H1 (cell line): ENCODE measurements at regions of chr1 and their contacts with region 1.

Region 1: DNA sequence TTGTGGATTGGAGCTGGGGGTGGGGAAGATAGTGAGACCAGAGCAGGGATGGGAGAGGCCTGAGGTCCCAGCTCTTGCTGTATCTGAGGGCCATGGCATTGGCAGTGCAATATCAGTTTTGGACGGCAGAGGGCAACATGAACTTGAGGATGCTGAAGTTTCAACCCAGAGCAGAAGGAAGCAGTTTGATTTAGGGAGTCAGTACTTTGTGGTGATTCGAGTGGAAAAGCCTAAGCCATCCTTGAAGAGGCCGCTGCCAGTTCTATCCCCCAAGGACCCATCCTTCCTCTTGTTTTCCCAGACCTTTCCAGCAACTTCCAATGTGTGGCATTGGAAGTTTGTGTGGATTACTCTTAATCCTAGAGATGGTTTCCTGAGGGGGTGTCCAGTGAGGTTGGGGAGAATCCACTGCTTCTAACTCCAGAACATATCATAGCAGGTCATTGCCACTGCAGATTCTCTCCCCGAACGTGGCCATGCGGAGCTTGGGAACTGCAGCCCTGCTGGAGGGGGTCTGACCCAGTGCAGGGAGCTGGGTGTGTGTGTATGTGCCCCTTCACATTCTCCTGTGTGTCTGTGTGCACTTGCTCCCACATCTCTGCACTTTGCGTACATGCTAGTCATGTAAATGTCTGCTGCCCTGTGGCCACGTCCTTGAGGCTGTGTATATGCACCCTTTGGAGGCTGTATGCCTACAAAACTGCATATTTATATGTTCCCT is 24.1 kb downstream of the SLC26A9 start:
- DNase-seq: peak; percentile 70 to 92
- H3K4me3 ChIP-seq: no peak overlapping the region
- H3K27ac ChIP-seq: no peak overlapping the region
- H3K4me1 ChIP-seq: peaks cover 0 to 6% (median 2%) of the 10 kb centered on the region in 4 experiments; a peak in 4 of 7 replicates
- H3K27me3 ChIP-seq: no peaks in the 10 kb centered on the region; a peak in 1 of 7 replicates
- CTCF ChIP-seq: peak; percentile 84 to 99 (median 96)
- EP300 ChIP-seq: no peak
- POLR2A ChIP-seq: no peak
- RAD21 ChIP-seq: peak; percentile 98 to 99

Region 2: GRCh38 chr1:205930799-205931281 is 11.7 kb after region 1 on chr1:
- CTCF ChIA-PET with region 1: interaction called, 45 read pairs
- POLR2A ChIA-PET with region 1: no interaction called
- DNase-seq: no peak
- H3K4me3 ChIP-seq: no peak overlapping the region
- H3K27ac ChIP-seq: no peak overlapping the region
- H3K4me1 ChIP-seq: peaks cover 0 to 9% (median 3%) of the 10 kb centered on the region in 4 experiments; a peak in 2 of 7 replicates
- H3K27me3 ChIP-seq: no peaks in the 10 kb centered on the region; a peak in 1 of 7 replicates
- CTCF ChIP-seq: no peak
- EP300 ChIP-seq: no peak
- POLR2A ChIP-seq: no peak
- RAD21 ChIP-seq: no peak

Region 3: GRCh38 chr1:205950280-205950679 is 31.1 kb after region 1 on chr1:
- CTCF ChIA-PET with region 1: interaction called, 110 read pairs
- POLR2A ChIA-PET with region 1: no interaction called
- DNase-seq: no peak
- H3K4me3 ChIP-seq: no peak overlapping the region
- H3K27ac ChIP-seq: no peak overlapping the region
- H3K4me1 ChIP-seq: peaks cover 0 to 6% (median 6%) of the 10 kb centered on the region in 4 experiments; a peak in 5 of 7 replicates
- H3K27me3 ChIP-seq: peaks cover 0 to 2% (median 0%) of the 10 kb centered on the region in 4 experiments; a peak in 2 of 7 replicates
- CTCF ChIP-seq: no peak
- EP300 ChIP-seq: no peak
- POLR2A ChIP-seq: no peak
- RAD21 ChIP-seq: no peak

Region 4: GRCh38 chr1:205983925-205984725 is 64.9 kb after region 1 on chr1:
- CTCF ChIA-PET with region 1: interaction called, 394 read pairs
- POLR2A ChIA-PET with region 1: interaction called, 3 read pairs
- DNase-seq: peak in 1 of 2 experiments; percentile 72
- H3K4me3 ChIP-seq: no peak overlapping the region
- H3K27ac ChIP-seq: no peak overlapping the region
- H3K4me1 ChIP-seq: no peaks in the 10 kb centered on the region; a peak in 2 of 7 replicates
- H3K27me3 ChIP-seq: no peaks in the 10 kb centered on the region
- CTCF ChIP-seq: peak; percentile 80 to 94 (median 92)
- EP300 ChIP-seq: no peak
- POLR2A ChIP-seq: no peak
- RAD21 ChIP-seq: peak; percentile 85 to 93

Region 5: GRCh38 chr1:206116191-206116872 is 197.1 kb after region 1 on chr1:
- CTCF ChIA-PET with region 1: interaction called, 10 read pairs
- POLR2A ChIA-PET with region 1: no interaction called
- DNase-seq: peak in 1 of 2 experiments; percentile 45
- H3K4me3 ChIP-seq: peak overlapping the region in 2 of 4 experiments; percentile 50 to 69; a peak in 5 of 8 replicates
- H3K27ac ChIP-seq: no peak overlapping the region
- H3K4me1 ChIP-seq: peaks cover 0 to 3% (median 2%) of the 10 kb centered on the region in 4 experiments; a peak in 3 of 7 replicates
- H3K27me3 ChIP-seq: peaks cover 3 to 26% (median 24%) of the 10 kb centered on the region in 4 experiments
- CTCF ChIP-seq: no peak
- EP300 ChIP-seq: no peak
- POLR2A ChIP-seq: no peak
- RAD21 ChIP-seq: no peak